Left colon (tissue), 2 donors: ENCODE measurements at regions of chrX and their contacts with region 1.

Region 1: GRCh38 chrX:2595258-2595657 is 94.5 kb upstream of the DHRSX start:
- DNase-seq: no peak
- ATAC-seq: no peak

Region 2: GRCh38 chrX:1649621-1650020 is 945.6 kb before region 1 on chrX:
- intact Hi-C with region 1: loop called (anchors 5 to 10 kb)
- DNase-seq: no peak
- ATAC-seq: no peak

Region 3: DNA sequence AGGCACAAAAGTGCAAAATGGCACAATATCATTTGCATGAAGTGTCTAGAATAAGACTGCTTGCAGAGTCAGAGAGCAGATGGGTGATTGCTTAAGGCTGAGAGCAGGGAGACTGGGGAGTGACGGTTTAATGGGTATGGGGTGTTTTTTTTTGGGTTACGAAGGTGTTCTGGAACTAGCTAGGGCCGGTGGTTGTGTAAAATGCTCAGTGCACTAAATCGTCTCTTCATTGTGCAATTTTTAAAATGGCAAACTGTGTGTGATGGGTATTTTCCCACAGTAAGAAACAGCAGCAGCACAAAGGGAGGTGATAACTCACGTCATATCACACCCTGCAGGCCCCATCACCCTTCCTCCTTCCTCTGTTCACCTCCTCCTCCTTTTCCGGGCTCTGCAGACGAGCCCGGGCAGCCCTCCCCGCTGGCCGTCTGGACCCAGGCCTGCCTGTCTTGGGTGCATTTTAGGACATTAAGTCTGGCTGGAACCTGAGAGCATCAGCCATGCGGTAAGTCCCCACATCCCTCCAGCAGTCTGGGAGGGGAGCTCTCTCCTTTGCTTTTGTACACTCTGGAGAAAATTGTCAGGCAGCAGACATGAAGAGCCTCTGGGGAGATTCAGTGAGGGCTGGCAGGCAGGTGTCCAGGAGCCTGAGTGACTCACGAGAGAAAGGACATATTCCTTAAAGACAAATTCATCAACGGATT is 937.7 kb before region 1 on chrX:
- intact Hi-C with region 1: loop called (anchors 5 to 10 kb)
- DNase-seq: peak in 1 of 2 donors; percentile 24
- ATAC-seq: peak; percentile 35

Region 4: GRCh38 chrX:1686642-1687041 is 908.6 kb before region 1 on chrX:
- intact Hi-C with region 1: no loop called
- DNase-seq: no peak
- ATAC-seq: no peak